Right ventricle myocardium superior (tissue), 1 donor: ENCODE measurements at regions of chr12 and their contacts with region 1.

Region 1: DNA sequence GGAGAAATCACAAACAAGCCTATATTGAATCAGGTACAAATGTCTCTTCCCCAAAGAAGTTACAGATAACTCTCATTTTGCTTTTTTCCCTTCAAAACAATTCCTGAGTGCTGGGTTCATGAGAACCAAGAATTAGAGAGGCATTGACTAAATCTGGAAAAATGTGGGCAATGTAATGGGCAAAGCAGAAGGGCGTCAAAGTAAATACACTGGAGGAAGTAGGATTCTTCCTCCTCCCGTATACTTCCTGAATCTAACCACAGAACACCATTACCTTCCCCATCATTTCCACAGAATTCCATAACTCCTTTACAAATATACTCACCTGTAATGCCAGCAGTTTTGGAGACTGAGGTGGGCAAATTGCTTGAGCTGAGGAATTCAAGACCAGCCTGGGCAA is 3.0 kb upstream of the RBMS2 start:
- DNase-seq: no peak
- ATAC-seq: no peak

Region 2: GRCh38 chr12:56571126-56571525 is 52.6 kb after region 1 on chr12:
- intact Hi-C with region 1: loop called (anchors 5 kb)
- DNase-seq: no peak
- ATAC-seq: no peak

Region 3: GRCh38 chr12:56593909-56594621 is 75.5 kb after region 1 on chr12:
- intact Hi-C with region 1: no loop called
- DNase-seq: no peak
- ATAC-seq: peak; percentile 63

Region 4: DNA sequence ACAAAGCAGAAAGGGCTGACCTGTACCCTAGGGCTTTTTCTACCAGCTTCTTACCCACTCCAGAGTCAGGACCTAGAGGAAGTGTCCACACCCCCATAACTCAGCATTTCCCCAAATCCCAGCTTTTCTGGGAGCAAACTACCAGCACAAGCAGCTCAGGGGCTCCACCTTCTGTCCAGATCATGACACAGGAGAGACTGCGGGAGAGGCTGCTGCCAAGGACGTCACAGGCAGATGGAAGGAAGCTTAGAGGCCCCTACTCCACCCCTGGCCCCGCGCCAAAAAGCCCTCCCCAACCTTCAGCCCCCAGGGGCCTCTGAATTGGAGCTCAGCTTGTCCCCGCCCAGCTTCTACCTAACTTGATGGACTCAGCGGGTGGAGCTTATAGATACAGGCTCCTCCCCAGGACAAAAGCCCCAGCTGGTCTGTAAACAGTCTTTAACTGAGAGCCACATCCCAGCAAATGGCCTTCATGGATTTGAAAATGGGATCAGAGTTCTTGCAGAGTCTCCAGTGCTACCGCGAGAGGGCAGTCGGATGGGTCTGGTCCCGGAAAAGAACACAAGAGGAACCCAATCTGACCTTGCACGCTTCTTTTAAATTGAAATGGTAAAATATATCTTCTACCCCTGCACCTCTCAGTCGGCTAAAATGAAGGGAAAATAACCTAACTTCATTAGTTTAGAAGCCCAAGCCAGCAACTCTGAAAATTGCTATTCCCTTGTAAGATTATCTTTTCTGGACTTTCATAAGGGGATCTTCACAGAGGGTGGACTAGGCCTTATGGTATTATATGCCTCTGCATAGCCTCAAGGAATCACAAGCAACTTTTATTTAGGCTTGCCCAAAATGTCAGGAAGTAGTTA is 118.3 kb after region 1 on chr12:
- intact Hi-C with region 1: loop called (anchors 10 kb)
- DNase-seq: peak; percentile 98
- ATAC-seq: peak; percentile 81